Activated naive CD4-positive, alpha-beta T cell treated with anti-CD3 and anti-CD28 coated beads for 36 hours (primary cell): ENCODE measurements at regions of chr9 and their contacts with region 1.

Region 1: GRCh38 chr9:7676609-7677156 is 122.9 kb downstream of the DMAC1 start:
- DNase-seq: no peak
- H3K4me3 Mint-ChIP-seq: no peak overlapping the region
- H3K27ac Mint-ChIP-seq: no peak overlapping the region
- H3K4me1 Mint-ChIP-seq: no peaks in the 10 kb centered on the region
- H3K27me3 Mint-ChIP-seq: no peaks in the 10 kb centered on the region

Region 2: DNA sequence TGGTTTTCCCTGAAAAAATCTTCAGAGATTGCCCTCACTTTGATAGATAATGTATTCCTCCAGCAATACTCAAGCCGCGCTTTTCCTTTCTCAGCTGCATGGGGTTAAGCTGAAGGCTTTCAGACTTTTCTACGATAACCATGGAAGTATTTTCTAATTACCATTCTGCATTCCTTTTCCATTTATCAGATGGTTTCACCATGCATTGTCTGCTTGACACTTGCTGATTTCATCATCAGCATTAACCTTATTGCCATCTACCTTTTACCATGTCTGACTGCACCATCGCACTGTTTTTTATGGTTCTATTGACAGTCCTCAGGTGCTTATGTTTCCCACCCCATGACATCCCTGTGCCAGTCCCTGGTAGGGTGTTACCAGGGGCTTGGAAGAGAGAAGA is 31.3 kb after region 1 on chr9:
- CTCF ChIA-PET with region 1: no interaction called
- intact Hi-C with region 1: no loop called
- DNase-seq: no peak
- H3K4me3 Mint-ChIP-seq: no peak overlapping the region
- H3K27ac Mint-ChIP-seq: no peak overlapping the region
- H3K4me1 Mint-ChIP-seq: no peaks in the 10 kb centered on the region
- H3K27me3 Mint-ChIP-seq: no peaks in the 10 kb centered on the region

Region 3: DNA sequence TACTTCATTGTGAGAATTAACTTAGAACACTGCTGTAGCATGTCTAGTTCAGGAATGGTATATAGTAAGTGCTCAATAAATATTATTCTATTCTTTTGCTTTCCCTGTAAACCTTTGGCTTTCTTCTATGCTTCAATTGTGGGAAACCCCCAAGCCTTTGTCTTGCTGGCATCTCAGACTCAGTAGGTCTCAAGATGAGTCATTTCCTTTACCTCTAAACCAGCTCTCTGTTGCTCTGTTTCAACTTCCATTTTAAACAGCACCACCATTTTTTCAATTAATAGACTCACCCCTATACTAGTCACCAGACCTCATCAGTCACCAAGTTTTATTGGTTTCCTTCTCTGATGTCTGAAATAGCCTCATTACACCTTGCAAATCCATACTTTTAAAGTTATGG is 79.4 kb after region 1 on chr9:
- CTCF ChIA-PET with region 1: no interaction called
- intact Hi-C with region 1: no loop called
- DNase-seq: peak; percentile 46
- H3K4me3 Mint-ChIP-seq: no peak overlapping the region
- H3K27ac Mint-ChIP-seq: peak overlapping the region; percentile 72
- H3K4me1 Mint-ChIP-seq: peaks cover 24% of the 10 kb centered on the region
- H3K27me3 Mint-ChIP-seq: no peaks in the 10 kb centered on the region

Region 4: DNA sequence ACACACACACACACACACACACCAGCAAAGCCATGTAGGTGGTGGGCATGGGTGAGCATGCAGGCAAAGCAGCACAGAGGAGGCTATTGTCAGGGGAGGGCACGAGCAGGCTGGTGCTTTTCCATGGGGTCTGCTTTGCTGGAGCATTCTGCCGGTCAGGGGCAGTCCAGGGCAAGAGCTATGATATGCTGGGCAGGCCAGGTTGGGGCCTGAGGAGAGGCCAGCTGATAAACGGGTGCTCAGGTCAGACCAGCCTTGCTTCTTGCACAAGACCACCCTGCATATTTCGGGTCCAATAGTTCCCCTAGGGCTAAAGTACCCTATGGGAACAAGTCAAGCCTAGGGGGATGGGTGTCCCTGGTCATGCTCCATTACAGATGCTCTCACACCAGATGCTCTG is 376.8 kb after region 1 on chr9:
- CTCF ChIA-PET with region 1: no interaction called
- intact Hi-C with region 1: loop called (anchors 10 kb)
- DNase-seq: no peak
- H3K4me3 Mint-ChIP-seq: no peak overlapping the region
- H3K27ac Mint-ChIP-seq: no peak overlapping the region
- H3K4me1 Mint-ChIP-seq: no peaks in the 10 kb centered on the region
- H3K27me3 Mint-ChIP-seq: no peaks in the 10 kb centered on the region

Region 5: GRCh38 chr9:8570776-8571175 is 894.1 kb after region 1 on chr9:
- CTCF ChIA-PET with region 1: no interaction called
- intact Hi-C with region 1: loop called (anchors 5 kb)
- DNase-seq: no peak
- H3K4me3 Mint-ChIP-seq: no peak overlapping the region
- H3K27ac Mint-ChIP-seq: no peak overlapping the region
- H3K4me1 Mint-ChIP-seq: no peaks in the 10 kb centered on the region
- H3K27me3 Mint-ChIP-seq: peaks cover 8% of the 10 kb centered on the region